Kidney (tissue), 22 donors: ENCODE measurements at regions of chr7 and their contacts with region 1.

Region 1: DNA sequence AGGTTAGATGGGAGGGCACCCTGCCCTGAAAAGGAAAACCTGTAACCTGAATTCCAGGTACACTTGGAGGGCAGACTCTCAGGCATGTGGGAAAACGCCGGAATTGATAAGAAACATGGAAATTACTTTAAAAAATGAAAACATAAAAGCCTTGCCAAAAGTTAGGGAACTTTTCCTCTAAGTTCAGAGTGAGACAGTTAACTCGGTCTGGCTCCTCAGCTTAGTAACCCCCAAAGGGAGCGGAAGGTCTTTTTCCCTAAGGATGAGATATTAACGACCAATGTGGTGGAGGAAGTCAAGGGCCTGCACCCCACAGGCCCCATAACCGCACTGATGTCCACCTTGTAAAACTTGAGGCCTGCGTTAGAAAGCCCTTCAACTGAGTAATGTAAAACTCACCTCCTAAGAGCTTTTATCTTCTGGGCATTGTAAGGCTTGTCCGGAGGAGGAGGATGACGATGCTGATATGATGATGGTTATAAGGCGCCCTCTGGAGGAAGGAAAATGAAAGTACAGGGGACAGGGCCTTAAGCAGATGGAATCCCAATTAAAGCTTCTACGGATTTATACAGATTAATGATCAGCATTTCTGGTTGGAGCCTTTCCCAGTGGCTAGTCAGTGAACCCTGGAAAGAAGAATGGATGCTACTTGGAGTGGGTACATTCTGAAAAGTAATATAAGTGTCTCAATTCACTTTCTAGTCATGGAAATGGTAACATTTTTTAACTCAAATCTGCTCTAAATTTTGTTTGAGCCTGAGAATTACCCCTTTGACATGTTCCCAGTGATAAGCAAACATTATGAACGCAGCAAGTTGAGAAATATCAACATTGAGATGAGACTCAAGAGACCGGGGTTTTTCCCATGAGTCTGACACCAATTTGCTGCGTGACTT is 694 bp downstream of the COL1A2 start:
- DNase-seq: peak in 4 of 5 donors; percentile 52 to 95 (median 79)
- H3K4me3 ChIP-seq: peak overlapping the region; percentile 63 to 82 (median 65)
- H3K27ac ChIP-seq: peak overlapping the region; percentile 45 to 70
- H3K4me1 ChIP-seq: peaks cover 0 to 7% (median 0%) of the 10 kb centered on the region in 3 donors
- H3K27me3 ChIP-seq: no peaks in the 10 kb centered on the region
- CTCF ChIP-seq: peak; percentile 80

Region 2: DNA sequence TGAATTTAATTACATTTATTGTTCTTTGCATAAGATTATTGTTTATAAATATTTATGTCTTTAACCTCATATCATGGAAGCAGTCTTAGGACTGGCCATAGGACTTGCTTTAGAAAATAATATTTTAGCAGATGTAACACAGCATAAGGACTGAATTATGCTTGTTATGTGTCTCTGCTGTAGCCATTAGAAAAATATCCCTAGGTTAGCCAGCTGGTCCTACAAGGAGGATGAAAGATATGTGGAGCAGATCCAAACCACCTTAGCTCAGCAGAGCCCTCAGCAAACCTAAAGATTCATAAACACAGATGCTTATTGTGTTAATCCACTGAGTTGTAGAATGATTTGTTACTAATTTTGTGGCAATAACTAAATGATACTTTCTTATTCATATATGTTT is 166.7 kb before region 1 on chr7:
- intact Hi-C with region 1: no loop called
- DNase-seq: no peak
- H3K4me3 ChIP-seq: no peak overlapping the region
- H3K27ac ChIP-seq: no peak overlapping the region
- H3K4me1 ChIP-seq: no peaks in the 10 kb centered on the region
- H3K27me3 ChIP-seq: no peaks in the 10 kb centered on the region
- CTCF ChIP-seq: no peak

Region 3: GRCh38 chr7:94294471-94295131 is 100.8 kb before region 1 on chr7:
- intact Hi-C with region 1: loop called (anchors 5 kb)
- DNase-seq: no peak
- H3K4me3 ChIP-seq: no peak overlapping the region
- H3K27ac ChIP-seq: no peak overlapping the region
- H3K4me1 ChIP-seq: peaks cover 0 to 3% (median 0%) of the 10 kb centered on the region in 3 donors
- H3K27me3 ChIP-seq: no peaks in the 10 kb centered on the region
- CTCF ChIP-seq: no peak